Right ventricle myocardium inferior (tissue), 1 donor: ENCODE measurements at regions of chr6 and their contacts with region 1.

Region 1: GRCh38 chr6:159693128-159693893 is at the start of gene SOD2:
- DNase-seq: peak; percentile 94
- ATAC-seq: peak; percentile 88
- total RNA-seq, gene SOD2: 1,072 TPM

Region 2: DNA sequence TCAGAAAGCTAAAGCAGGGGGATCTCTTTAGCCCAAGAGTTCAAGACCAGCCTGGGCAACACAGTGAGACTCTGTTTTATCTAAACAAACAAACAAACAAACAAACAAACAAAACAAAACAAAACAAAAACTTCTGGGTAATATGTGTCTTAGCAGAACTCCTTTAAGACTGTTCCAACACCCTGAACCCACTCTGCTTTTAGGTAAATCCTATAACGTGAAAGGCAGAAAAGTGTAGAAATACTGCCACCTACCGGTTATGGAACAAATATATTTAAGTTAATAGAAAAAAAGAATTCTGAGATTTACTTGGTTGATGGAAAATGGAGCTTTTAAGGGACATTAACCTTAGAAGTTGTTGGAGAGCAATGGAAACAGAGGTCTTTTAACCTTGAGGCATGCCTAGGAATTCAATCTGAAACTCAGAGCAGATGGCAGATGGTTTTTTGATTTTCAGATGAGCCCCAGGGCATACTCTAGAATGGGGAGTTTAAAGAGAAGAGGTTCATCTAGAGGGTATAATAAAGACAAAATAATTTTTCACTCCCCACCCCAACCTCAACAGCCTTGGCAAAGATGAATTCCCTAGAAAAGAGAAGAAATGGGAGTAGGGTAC is 38.7 kb before region 1 on chr6:
- intact Hi-C with region 1: no loop called
- DNase-seq: no peak
- ATAC-seq: peak; percentile 52

Region 3: DNA sequence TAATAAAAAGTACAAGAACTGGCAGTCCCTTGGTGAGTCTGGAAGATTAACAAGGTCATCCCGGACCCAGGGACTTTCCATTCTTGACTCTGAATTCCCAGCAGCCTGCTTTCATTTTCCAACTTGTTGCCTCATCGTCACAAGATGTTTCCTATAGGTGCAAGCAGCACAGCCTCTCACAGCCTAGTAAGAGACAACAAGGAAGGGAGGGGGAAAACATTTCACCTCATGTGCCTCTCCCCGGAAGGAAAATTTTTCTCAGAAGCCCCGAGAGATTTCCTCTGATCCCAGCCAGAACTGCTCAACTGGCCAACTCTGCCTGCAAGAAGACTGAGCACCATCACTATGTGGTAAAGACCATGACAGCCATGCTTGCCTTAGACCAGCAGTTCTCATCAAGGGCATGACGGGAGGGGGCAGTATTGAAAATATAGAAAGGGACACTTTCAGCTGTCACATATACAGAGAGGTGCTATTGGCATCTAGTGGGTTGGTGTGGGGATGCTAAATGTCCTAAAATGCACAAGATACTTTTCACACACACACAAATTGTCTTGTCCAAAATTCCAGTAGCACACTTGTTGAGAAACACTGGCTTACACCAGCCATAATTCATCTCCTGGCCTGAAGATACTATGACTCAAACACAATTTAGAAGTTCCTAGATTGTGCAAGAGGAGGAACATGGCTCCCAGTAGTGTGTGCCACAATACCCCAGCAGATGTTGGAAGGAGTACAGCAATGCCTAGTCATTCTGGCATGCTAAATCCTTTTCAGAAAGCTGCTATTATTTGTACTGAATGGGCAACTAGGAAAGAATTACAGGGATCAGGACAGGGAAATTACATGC is 23.2 kb after region 1 on chr6:
- intact Hi-C with region 1: loop called (anchors 2 kb)
- DNase-seq: no peak
- ATAC-seq: peak; percentile 93

Region 4: DNA sequence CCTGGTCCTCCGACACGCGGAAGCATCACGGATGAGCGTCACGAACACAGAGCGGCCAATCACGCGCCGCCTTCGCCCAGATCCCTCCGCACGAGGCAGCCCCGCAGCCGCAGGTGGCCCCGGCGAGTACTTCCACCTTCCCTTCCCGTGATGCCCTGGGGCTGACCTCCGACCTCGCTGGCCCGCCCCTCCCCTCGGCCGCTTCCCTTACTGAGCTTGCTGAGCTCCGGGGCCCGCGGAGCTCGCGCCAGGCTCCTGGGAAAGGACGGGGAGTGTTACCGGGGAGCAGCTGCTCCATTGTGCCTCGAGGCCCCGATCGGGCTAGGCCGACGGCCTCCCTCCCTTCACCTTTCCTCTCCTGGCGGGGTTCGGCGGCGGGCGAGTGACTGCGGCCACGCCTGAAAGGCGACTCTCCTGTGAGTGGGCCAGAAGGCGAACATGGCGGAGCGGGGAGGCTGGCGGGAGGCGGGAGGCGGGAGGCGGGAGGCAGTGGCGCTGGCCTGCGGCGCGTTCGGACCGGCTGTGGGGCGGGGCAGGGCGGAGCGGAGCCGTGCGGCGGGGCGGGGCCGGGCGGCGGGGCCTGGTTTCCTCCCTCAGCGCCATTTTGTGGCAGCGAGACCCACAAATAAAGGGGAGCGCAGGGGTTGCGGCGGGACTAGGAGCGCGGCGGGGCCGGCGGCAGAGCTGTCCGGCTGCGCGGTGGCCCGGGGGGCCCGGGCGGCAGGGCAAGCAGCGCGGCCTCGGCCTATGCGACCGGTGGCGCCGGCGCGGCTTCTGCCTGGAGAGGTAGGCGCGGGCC is 33.8 kb after region 1 on chr6 and contains the start of gene WTAP:
- intact Hi-C with region 1: loop called (anchors 1 kb)
- DNase-seq: peak; percentile 97
- ATAC-seq: peak; percentile 96
- total RNA-seq, gene WTAP: 45.9 TPM

Region 5: DNA sequence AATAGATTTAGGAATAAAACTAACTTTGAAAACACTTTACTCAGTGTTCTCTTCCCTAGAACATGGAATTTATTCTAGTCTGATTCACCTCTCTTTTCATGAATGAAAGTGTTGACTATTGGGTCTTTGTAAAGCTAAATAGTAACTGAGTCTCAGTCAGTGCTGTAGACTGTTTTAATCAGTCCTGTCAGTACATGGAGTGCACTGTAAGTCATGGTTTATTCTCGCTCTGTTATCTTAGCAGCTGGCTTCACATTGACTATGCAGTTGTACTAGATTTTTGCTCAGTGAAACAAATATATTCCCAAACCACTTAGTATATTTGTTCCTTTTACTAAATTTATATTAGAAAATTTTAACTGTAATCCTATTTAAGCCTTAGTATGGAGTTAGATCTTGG is 53.4 kb after region 1 on chr6:
- intact Hi-C with region 1: loop called (anchors 5 kb)
- DNase-seq: no peak
- ATAC-seq: peak; percentile 70

Region 6: GRCh38 chr6:159761873-159762680 is 68.8 kb after region 1 on chr6 and contains the start of gene ACAT2:
- intact Hi-C with region 1: loop called (anchors 5 kb)
- DNase-seq: peak; percentile 97
- ATAC-seq: peak; percentile 99
- total RNA-seq, gene ACAT2: 5.2 TPM

Region 7: DNA sequence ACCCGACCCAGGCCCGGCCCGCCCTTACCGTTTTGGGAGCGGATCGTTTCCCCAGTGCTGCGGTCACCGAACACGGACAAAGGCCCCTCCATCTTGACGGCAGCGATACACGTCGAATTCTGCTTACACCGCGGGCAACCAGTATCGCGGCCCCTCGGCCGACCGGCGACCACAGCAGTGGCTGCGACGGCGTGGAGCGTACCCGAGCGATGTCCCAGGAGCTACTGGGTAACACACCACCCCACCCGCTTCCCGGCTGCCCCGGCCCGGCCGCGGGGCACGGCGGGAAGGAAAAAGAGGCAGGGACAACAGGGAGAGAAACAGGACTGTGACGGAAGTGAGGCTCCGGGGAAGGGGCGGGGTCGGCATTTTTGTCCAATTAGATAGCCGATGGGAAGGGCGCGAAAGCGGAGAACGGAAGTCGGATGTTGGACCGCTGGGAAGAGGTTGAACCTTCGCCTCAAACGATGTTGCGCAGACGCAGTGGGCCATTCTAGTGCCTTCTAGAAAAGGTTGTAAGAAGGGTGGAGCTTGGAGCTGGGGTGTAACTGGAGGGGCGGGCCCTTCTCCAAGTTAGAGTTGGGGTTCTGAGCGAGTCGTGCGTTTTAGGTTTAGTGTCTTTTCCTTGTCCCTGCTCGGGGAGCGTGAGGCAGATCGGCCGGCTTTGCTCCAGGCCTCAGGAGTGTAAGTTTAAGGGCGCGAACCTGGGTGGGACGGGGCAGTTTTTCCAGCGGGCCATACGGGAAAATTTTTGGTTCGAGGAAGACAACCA is 96.3 kb after region 1 on chr6 and contains the start of gene TCP1:
- intact Hi-C with region 1: loop called (anchors 1 kb)
- DNase-seq: peak; percentile 100
- ATAC-seq: peak; percentile 95
- total RNA-seq, gene TCP1: 170 TPM

Region 8: GRCh38 chr6:159941286-159942113 is 248.2 kb after region 1 on chr6:
- intact Hi-C with region 1: loop called (anchors 10 kb)
- DNase-seq: no peak
- ATAC-seq: no peak